Heart left ventricle (tissue), 16 donors: ENCODE measurements at regions of chr4 and their contacts with region 1.

Region 1: DNA sequence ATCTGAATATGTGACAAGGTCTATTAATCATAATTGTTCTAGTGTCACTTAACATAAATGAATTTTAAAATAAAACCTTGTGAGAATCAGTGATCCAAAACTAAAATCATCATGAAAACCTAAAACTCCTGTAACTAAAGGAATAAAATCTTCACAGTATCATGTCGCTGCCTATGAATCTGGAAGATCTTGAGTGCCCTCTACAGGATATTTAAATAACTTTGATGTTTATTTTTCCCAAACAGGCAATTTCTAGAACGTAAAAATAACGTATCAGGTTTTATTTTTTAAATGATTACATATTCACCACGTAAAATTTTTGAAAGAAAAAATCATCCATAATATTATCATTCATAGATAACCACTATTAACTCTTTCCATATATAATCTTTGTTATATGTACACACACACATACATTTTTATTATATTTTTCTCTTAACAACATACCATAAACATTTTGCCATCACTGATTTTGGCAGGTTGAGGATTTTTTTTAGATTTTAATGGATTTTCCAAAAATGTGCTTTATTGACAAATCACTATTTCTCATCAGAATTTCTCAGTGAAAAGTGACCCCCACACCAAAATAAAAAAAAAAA is 79.6 kb downstream of the COMMD8 start:
- DNase-seq: no peak
- ATAC-seq: no peak
- H3K4me3 ChIP-seq: no peak overlapping the region
- H3K27ac ChIP-seq: no peak overlapping the region
- H3K4me1 ChIP-seq: no peaks in the 10 kb centered on the region
- H3K27me3 ChIP-seq: no peaks in the 10 kb centered on the region
- CTCF ChIP-seq: peak in 11 of 12 donors; percentile 26 to 73 (median 53)
- POLR2A ChIP-seq: no peak

Region 2: DNA sequence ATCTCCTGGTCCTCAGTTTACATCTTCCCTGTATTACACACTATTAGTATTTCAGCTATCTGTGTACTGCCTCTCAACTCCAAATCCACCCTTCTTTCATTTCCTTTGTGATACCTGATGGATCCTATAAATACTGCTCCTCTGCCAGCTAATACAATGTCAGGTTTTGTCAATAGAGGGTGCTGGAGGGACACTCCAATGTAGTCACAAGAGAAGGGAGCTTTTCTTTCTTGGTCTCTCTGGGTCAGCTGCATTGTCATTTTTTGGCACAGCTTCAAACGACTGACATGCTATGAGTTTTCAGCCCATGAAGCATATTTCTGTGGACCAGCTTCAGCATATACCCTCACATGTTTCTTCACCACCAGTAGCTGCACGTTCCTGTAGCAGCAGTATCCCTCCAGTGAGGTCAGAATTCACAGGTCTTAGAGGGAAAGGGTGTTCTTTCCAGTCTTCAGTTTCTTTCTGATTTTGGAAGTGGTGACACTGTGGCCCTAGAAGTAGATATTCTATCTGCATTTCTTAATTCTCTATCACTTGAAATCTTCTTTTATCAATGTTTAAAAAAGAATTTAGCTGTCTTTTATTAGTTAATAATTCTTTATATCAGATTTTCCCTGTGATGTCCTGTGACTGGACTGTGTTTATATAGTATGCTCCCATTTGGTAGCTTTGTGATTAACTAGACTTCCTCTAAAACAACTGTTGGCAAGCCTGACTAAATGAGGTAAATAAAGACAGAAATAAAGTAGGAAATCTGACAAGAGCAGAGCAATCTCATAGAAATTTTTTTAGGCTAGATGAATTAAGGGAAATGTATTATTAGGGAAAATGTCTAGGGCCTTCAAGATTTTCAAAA is 1054.6 kb before region 1 on chr4:
- intact Hi-C with region 1: loop called in 1 of 10 experiments (anchors 10 kb)
- DNase-seq: no peak
- ATAC-seq: peak in 1 of 4 donors; percentile 41
- H3K4me3 ChIP-seq: no peak overlapping the region
- H3K27ac ChIP-seq: no peak overlapping the region
- H3K4me1 ChIP-seq: no peaks in the 10 kb centered on the region
- H3K27me3 ChIP-seq: no peaks in the 10 kb centered on the region
- CTCF ChIP-seq: peak in 9 of 12 donors; percentile 9 to 51 (median 25)
- POLR2A ChIP-seq: no peak

Region 3: GRCh38 chr4:47032415-47033106 is 351.4 kb before region 1 on chr4:
- intact Hi-C with region 1: loop called in 2 of 10 experiments (anchors 10 kb)
- DNase-seq: peak; percentile 52 to 81 (median 77)
- ATAC-seq: peak; percentile 89 to 95 (median 94)
- H3K4me3 ChIP-seq: peak overlapping the region; percentile 11 to 64 (median 56)
- H3K27ac ChIP-seq: peak overlapping the region in 9 of 12 donors; percentile 39 to 81 (median 74)
- H3K4me1 ChIP-seq: peaks cover 0 to 16% (median 0%) of the 10 kb centered on the region in 12 donors
- H3K27me3 ChIP-seq: peaks cover 0 to 56% (median 5%) of the 10 kb centered on the region in 9 donors
- CTCF ChIP-seq: peak; percentile 43 to 78 (median 59)
- POLR2A ChIP-seq: no peak

Region 4: GRCh38 chr4:47122592-47123291 is 261.2 kb before region 1 on chr4:
- intact Hi-C with region 1: loop called in 1 of 10 experiments (anchors 10 kb)
- DNase-seq: peak in 4 of 5 donors; percentile 24 to 44 (median 24)
- ATAC-seq: peak; percentile 52 to 76 (median 64)
- H3K4me3 ChIP-seq: no peak overlapping the region
- H3K27ac ChIP-seq: no peak overlapping the region
- H3K4me1 ChIP-seq: peaks cover 0 to 3% (median 0%) of the 10 kb centered on the region in 12 donors
- H3K27me3 ChIP-seq: no peaks in the 10 kb centered on the region
- CTCF ChIP-seq: peak; percentile 58 to 89 (median 73)
- POLR2A ChIP-seq: no peak